ENCODE measurements at regions of chr3 and their contacts with region 1.

Region 1: DNA sequence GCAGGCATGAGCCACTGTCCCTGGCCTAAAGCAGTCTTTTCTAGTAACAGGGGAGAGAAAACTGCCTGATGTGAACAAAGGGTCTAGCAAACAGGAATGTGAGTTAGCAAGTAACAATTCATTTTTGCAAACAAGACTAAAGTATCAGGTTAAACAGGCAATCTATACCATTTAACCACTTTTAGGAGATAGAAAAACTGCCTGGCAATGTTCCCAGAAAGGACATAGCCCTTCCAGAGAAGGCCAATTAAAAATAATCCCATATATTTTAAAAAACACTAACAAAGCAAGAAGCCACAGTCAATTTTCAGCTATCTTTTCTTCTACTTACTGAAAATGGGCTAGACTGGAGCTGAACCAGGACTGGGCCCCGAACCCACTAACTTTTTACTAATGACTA is 6.3 kb downstream of the RBSN start:
- DNase-seq: no peak
- ATAC-seq: no peak
- H3K4me3 ChIP-seq: no peak overlapping the region
- H3K27ac ChIP-seq: no peak overlapping the region
- H3K4me1 ChIP-seq: peaks cover 2 to 23% (median 7%) of the 10 kb centered on the region in 9 donors
- H3K27me3 ChIP-seq: no peaks in the 10 kb centered on the region
- CTCF ChIP-seq: no peak

Region 2: DNA sequence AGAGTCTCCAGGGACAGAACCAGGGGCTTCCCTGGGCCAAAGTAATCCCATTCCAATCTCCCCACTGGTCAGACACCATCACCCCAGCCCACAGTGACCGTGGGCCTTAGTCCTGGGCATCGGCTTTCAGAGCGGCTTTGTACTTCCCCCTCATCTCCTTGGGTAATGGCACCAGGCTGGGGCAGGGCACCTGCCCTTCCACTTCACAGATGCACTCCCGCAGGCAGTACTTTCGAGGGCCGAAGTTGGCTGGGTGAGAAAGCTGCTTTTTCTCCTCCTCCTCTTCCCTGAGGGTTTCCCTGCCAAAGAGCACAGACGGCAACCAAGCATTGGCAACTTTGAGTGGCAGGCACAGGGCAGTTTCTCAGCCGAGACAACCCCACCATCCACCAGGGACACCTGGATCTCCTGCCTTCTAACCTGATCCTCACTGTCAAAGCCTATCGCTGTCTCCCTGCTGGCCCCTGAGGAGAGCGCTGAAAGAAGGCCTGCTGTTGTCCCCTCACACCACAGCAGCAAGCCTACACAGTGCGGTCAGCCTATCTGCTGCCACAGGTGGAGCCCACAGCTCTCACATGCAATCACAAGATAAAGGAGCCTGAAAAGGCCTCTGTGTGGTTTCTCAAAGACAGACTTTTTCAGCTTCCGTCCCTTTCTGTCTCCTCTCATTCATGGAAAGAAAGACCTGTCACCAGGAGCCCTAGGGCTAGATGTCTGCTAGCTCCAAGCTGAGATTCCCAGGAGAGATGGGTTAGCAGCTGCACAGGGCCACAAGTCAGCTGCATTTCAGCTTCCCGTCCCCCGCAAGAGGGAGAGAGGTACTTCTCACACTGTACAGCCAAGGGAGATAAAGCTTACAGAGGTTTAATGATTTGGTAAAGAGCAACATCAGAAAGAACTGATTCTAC is 40.1 kb before region 1 on chr3:
- intact Hi-C with region 1: loop called in 1 of 10 experiments (anchors 1 kb)
- DNase-seq: no peak
- ATAC-seq: peak in 3 of 8 donors; percentile 12 to 39 (median 17)
- H3K4me3 ChIP-seq: no peak overlapping the region
- H3K27ac ChIP-seq: no peak overlapping the region
- H3K4me1 ChIP-seq: peaks cover 0 to 5% (median 0%) of the 10 kb centered on the region in 9 donors
- H3K27me3 ChIP-seq: no peaks in the 10 kb centered on the region
- CTCF ChIP-seq: no peak

Measured in heart right ventricle (tissue), 16 donors.